Activated B cell treated with CpG ODN at 0.5 μM for 24 hours (primary cell): ENCODE measurements at regions of chr5 and their contacts with region 1.

Region 1: DNA sequence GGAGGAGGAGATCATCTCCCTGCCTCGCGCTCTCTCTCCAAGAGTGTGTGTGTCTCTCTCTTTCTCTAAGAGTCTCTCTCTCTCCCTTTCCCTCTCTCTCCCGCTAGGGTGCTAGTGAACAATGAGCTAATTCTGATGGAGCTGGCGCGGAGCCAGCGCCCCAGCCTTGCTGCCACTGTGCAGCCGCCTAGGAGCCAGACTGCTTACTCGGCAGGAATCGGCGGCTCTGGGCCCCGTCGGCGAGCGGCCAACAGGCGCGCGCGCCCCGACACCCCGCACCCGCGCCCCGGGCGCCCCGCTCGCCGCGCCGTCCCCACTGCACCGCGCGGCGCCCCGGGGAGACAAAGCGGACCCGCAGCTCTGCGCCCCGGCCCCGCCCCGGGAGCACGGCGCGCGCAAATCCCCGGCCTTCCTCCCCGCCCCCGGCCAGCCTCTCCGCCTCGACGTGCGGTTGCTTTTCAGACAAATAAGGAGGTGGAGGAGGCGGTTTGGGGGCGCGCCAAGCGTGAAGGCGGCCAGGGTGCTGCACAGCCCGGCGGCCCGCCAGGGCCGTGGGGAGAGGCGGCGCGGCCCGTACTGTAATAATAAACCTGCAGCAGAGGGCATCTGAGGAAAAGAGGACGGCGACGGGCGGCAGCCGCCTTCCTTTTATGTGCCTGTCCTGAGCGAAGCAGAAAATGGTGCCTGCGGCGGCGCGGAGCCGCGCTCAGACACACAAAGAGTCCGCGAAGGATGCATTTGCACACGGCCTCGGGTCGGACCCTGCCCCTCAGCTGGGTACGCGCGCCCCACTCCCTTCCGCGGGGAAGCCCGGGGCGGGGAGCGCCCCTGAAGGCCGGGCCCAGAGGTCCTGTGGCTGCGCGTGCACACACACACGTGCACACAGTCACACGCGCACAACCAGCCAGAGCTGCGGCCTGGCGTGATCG is 625 bp upstream of the NREP start:
- DNase-seq: peak; percentile 81
- ATAC-seq: peak; percentile 81
- H3K4me3 Mint-ChIP-seq: peak overlapping the region; percentile 88
- H3K27ac Mint-ChIP-seq: peak overlapping the region; percentile 91
- H3K4me1 Mint-ChIP-seq: peaks cover 23% of the 10 kb centered on the region
- H3K27me3 Mint-ChIP-seq: no peaks in the 10 kb centered on the region
- CTCF ChIP-seq: no peak

Region 2: DNA sequence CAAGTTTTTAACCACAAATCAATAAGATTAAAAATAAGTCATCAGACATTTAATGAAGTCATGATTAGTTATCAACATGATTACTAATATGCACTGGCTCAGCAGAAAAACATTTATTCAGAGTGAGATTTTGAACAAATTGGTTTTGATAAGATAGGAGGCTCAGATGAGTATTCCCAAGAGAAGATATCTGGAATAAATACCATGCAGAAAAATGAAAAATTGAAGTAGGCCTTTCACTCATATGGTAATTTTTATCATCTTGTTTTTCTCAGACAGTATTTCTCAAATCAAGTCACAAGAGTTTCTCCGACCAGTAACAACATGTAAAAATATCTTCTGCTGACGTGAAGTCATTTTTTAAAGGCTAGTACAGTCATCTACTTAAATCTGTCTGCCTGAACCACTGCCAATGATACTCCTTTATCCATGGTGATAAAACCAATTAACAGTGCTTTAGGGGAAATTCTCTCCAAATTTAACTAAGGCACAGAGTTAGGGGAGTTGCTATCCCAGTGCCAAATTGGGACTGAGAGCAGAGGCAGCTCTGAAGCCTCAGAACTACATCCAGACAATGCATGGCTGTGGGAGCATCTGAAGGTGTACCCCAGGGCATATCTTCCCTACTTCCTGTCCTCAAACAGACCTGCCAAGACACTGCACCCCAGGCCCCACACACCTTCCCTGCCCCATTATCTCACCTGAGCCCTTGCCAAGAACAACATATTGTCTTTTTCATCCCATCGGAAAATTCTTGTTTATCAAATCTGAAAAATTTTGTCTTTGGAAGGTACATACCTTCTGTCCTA is 791.6 kb before region 1 on chr5:
- CTCF ChIA-PET with region 1: no interaction called
- POLR2A ChIA-PET with region 1: no interaction called
- intact Hi-C with region 1: no loop called
- DNase-seq: no peak
- ATAC-seq: no peak
- H3K4me3 Mint-ChIP-seq: no peak overlapping the region
- H3K27ac Mint-ChIP-seq: no peak overlapping the region
- H3K4me1 Mint-ChIP-seq: no peaks in the 10 kb centered on the region
- H3K27me3 Mint-ChIP-seq: no peaks in the 10 kb centered on the region
- CTCF ChIP-seq: no peak

Region 3: DNA sequence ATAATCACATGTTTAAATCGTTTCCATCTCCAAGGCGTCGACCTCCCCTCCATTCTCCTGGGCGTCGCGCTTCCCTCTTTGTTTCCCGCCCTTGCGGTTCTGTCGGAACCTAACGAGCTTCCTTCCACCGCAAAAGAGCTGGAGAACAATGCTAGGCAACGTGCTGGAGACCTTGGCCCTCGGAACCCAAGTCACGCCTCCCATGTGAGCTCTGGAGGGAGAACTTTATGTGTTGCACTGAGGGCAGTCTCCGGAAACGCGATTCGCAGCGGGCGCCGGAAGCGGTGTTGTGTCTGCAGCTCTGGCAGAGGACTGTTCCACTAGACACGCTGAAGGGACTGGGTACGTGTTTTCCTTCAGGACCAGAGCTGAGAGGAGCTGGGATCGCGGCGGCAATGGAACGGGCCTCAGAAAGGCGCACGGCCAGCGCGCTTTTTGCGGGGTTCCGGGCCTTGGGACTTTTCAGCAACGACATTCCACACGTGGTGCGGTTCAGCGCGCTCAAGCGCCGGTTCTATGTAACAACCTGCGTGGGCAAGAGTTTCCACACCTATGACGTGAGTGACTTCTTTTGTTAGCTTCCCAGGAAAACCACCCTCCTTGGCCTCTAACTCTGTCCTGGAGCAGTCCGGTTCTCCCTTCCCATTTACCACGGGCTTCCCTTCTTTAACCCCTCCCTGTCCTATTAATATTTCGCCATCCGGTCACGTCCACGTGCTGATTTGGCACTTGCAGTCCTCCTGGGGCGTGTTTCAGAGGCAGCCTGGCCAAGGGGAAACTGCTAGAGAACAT is 665.4 kb before region 1 on chr5 and contains the start of gene WDR36:
- CTCF ChIA-PET with region 1: no interaction called
- POLR2A ChIA-PET with region 1: no interaction called
- intact Hi-C with region 1: loop called (anchors 1 kb)
- DNase-seq: peak; percentile 88
- ATAC-seq: peak; percentile 95
- H3K4me3 Mint-ChIP-seq: peak within 1 kb of the TSS; percentile 96
- H3K27ac Mint-ChIP-seq: peak within 1 kb of the TSS; percentile 90
- H3K4me1 Mint-ChIP-seq: peaks cover 31% of the 10 kb centered on the region
- H3K27me3 Mint-ChIP-seq: peaks cover 6% of the 10 kb centered on the region
- CTCF ChIP-seq: no peak
- total RNA-seq, gene WDR36: 42.6 and 48.6 TPM in 2 replicates

Region 4: DNA sequence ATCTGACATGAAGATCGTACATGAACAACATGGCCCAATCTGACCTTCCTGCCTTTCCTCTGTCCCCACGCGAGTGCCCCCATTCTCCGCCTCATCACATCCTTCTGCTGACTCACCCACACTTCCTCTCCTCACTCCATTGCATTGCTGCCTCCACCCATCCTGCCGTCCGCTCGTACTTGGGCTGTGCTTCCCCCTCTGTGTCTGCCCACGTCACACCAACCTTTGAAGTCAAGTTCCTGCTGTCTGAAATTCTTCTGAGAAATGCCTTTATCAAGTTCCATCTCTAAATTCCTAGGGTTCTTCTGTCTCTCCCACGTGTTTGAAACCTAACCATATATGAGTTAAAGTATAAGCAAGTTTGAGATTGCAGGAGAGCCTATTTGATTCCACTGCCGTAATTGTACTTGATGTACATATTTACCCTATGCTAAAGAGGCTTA is 227.3 kb before region 1 on chr5:
- CTCF ChIA-PET with region 1: interaction called, 3 read pairs
- POLR2A ChIA-PET with region 1: interaction called, 14 read pairs
- intact Hi-C with region 1: loop called (anchors 1 kb)
- DNase-seq: peak; percentile 61
- ATAC-seq: peak; percentile 100
- H3K4me3 Mint-ChIP-seq: peak overlapping the region; percentile 49
- H3K27ac Mint-ChIP-seq: peak overlapping the region; percentile 75
- H3K4me1 Mint-ChIP-seq: peaks cover 23% of the 10 kb centered on the region
- H3K27me3 Mint-ChIP-seq: no peaks in the 10 kb centered on the region
- CTCF ChIP-seq: no peak

Region 5: DNA sequence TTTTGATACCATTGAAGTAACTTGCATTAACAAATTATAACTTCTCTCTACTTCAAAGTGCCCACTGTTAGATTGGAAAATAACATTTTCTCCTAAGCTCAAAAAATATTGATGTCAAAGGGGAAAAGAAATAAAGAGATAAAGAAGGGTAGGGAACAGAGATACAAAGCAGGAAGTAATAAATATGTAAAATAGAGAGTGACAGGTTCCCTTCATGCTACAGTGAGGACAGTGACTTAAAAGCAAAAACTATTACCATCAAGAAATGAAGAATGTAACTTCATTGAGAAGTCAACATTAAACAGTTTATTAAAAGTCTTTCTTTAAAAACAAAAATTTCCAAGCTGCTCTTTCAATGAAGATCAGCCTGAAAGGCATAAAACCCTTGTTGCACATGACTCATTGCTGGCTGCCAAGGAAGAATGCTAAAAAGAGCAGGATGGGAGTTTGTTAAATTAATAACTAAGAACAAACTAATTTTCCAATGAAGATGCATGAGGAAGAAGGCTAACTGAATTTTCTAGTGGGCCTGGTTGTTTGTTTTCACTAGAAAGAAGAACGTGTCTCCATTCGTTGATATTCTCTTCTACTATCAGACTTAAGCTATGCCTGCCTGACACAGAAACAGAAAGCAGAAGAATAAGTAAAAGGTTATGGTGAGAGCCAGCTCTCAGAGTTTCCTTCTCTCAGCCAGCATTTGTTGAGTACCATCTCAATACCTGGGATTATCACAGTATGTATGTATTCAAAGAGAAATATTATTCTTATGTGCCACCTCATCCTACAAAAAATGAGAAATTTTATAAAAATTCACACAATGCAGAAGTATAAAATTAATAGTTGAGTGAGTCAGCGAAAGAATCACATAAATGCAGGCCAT is 197.1 kb after region 1 on chr5:
- CTCF ChIA-PET with region 1: no interaction called
- POLR2A ChIA-PET with region 1: interaction called, 3 read pairs
- intact Hi-C with region 1: loop called (anchors 5 kb)
- DNase-seq: no peak
- ATAC-seq: peak; percentile 49
- H3K4me3 Mint-ChIP-seq: peak overlapping the region; percentile 54
- H3K27ac Mint-ChIP-seq: no peak overlapping the region
- H3K4me1 Mint-ChIP-seq: peaks cover 23% of the 10 kb centered on the region
- H3K27me3 Mint-ChIP-seq: no peaks in the 10 kb centered on the region
- CTCF ChIP-seq: no peak

Region 6: GRCh38 chr5:112160652-112161391 is 403.2 kb after region 1 on chr5:
- CTCF ChIA-PET with region 1: no interaction called
- POLR2A ChIA-PET with region 1: interaction called, 16 read pairs
- intact Hi-C with region 1: loop called (anchors 1 kb)
- DNase-seq: peak; percentile 93
- ATAC-seq: peak; percentile 99
- H3K4me3 Mint-ChIP-seq: peak overlapping the region; percentile 97
- H3K27ac Mint-ChIP-seq: peak overlapping the region; percentile 82
- H3K4me1 Mint-ChIP-seq: peaks cover 25% of the 10 kb centered on the region
- H3K27me3 Mint-ChIP-seq: no peaks in the 10 kb centered on the region
- CTCF ChIP-seq: peak; percentile 89

Region 7: GRCh38 chr5:113513384-113514288 is 1756.0 kb after region 1 on chr5 and contains the start of gene YTHDC2:
- CTCF ChIA-PET with region 1: no interaction called
- POLR2A ChIA-PET with region 1: no interaction called
- intact Hi-C with region 1: loop called (anchors 2 kb)
- DNase-seq: peak; percentile 86
- ATAC-seq: peak; percentile 98
- H3K4me3 Mint-ChIP-seq: peak within 1 kb of the TSS; percentile 92
- H3K27ac Mint-ChIP-seq: peak within 1 kb of the TSS; percentile 87
- H3K4me1 Mint-ChIP-seq: peaks cover 28% of the 10 kb centered on the region
- H3K27me3 Mint-ChIP-seq: peaks cover 12% of the 10 kb centered on the region
- CTCF ChIP-seq: no peak
- total RNA-seq, gene YTHDC2: 41.7 and 44.8 TPM in 2 replicates